ENCODE measurements at regions of chr10 and their contacts with region 1.

Region 1: GRCh38 chr10:17443707-17444387 is 10.5 kb downstream of the ST8SIA6 start:
- DNase-seq: peak; percentile 19
- H3K4me3 Mint-ChIP-seq: peak overlapping the region; percentile 50
- H3K27ac Mint-ChIP-seq: no peak overlapping the region
- H3K4me1 Mint-ChIP-seq: peaks cover 21% of the 10 kb centered on the region
- H3K27me3 Mint-ChIP-seq: peaks cover 8% of the 10 kb centered on the region

Region 2: GRCh38 chr10:17425584-17426262 is 18.1 kb before region 1 on chr10:
- intact Hi-C with region 1: loop called (anchors 1 kb)
- DNase-seq: peak; percentile 34
- H3K4me3 Mint-ChIP-seq: peak overlapping the region; percentile 8
- H3K27ac Mint-ChIP-seq: peak overlapping the region; percentile 36
- H3K4me1 Mint-ChIP-seq: peaks cover 70% of the 10 kb centered on the region
- H3K27me3 Mint-ChIP-seq: peaks cover 2% of the 10 kb centered on the region

Region 3: DNA sequence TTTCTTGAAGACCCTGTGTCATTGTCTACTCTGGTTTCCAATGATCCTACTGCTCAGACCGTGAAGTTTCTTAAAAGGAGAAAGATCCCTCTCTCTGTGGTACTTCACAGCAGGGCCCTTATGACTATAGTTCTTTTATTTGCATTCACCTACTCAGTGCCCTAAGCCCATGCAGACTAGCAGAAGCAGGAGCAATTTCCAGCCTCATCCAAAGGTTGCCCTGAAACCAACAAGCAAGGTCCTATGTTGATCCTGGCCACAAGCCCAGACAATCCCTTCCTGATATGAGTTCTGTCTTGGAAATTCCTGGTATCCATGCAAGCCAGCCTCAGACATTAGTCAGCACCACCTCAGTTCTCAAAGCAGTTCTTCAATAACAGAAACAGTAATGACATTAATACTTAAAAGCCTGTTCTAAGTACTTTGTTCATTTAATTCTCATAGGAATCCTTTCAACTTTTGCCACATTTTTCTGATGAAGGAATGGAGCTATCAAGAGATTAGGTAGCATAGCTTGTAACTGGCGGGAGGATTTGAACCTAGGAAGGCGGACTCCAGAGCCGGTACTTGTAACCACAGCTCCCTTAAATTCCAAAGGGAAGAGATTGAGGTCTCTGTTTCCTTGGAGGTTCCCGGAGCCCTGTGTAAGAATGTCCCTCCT is 68.6 kb after region 1 on chr10:
- intact Hi-C with region 1: loop called (anchors 1 kb)
- DNase-seq: no peak
- H3K4me3 Mint-ChIP-seq: peak overlapping the region; percentile 22
- H3K27ac Mint-ChIP-seq: peak overlapping the region; percentile 40
- H3K4me1 Mint-ChIP-seq: peaks cover 36% of the 10 kb centered on the region
- H3K27me3 Mint-ChIP-seq: peaks cover 2% of the 10 kb centered on the region